ENCODE measurements at regions of chr2 and their contacts with region 1.

Region 1: GRCh38 chr2:241514986-241515737 is 6.8 kb upstream of the STK25 start:
- DNase-seq: no peak
- ATAC-seq: peak; percentile 34

Region 2: DNA sequence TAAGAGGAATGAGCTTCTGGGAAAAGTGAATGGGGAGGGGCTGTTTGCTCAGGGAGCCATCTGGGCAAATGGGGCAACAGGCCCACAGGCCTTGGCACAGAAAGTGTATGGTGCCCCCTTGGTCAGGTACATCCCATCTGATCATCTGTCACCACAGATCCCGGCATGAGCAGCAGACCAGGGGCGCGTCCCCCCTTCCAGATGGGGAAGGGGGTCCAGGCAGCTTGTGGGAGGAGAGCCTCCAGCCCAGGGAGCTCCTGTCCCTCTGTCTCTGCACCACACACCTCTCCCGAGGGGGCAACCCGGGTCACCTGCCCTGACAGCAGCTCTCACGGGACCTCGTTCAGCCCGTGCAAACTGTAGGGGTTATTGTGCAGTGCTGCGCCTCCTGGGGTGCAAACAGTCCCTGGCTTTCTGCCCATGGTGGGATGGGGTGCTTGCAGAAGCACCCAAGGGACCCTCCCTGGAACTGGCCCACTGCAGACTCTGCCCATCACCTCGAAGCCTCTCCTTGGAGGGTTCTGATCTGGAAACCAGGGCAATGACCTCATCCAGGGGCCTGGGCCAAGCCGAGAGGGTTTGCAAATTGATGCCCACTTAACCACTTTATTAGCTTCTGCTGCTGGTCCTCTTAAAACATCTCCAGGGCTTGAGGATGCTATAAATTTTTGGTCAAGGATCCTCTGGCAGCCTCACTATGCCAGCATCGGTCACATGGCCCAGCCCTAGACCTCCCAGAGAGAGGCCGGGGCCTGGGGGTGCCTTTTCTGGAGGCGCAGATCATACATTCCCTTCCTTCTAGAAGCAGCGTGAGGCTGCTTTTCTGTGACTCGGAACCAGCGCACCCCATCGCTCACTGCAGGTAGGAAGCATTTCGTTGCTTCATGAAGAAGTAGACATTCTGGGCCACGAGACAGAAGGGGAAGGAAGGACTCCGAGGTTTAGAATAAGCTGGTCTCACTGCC is 35.7 kb after region 1 on chr2:
- intact Hi-C with region 1: no loop called
- DNase-seq: no peak
- ATAC-seq: no peak

Region 3: GRCh38 chr2:241609859-241610793 is 95.0 kb after region 1 on chr2:
- intact Hi-C with region 1: loop called in 1 of 2 experiments (anchors 10 kb)
- DNase-seq: peak; percentile 90 to 93
- ATAC-seq: peak; percentile 96